Activated naive CD4-positive, alpha-beta T cell treated with anti-CD3 and anti-CD28 coated beads for 36 hours (primary cell): ENCODE measurements at regions of chr6 and their contacts with region 1.

Region 1: DNA sequence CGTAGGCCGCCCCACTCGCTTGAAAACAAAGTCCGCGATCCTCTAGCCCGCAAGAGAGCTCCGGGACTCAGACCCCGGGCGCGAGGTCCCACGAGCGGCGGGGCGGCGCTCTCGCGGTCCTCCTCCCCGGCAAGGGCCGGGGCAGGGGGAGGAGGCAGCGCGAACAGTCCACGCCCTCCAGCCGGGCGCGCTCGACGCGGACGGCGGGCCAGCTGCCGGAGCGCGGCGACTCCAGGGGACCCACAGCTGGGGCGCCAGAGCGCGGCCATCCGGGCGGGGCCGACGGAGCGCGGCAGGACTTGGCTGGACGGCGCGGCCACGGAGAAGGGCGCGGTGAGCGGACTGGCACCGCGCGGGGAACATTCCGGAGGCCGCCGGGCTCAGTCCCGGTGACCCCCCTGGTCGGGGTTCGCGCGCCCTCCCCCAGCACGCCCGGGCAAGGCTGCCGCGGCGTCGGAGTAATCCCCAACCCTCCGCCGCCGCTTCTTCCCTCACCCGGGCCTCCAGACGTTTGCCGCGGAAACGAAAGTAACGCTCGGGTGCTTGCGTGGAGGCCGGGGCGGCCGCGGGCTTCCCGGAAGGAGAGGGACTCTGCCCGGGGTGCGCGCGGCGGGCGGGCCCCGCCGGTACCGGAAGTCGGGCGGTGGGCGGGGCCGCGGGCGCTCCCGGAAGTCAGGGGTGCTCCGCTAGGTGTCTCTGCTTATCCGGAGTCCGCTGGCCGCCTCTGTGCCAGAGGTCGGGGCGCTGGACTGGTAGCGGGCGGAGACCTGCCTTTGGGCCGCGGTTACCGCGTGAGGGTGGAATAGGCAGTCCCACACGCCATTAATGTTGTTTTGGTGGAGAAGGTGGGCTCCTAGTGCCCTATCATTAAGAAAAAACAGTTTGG is at the start of gene RIPK1:
- DNase-seq: peak; percentile 95
- H3K4me3 Mint-ChIP-seq: peak within 1 kb of the TSS; percentile 92
- H3K27ac Mint-ChIP-seq: peak within 1 kb of the TSS; percentile 97
- H3K4me1 Mint-ChIP-seq: peaks cover 49% of the 10 kb centered on the region
- H3K27me3 Mint-ChIP-seq: no peaks in the 10 kb centered on the region
- total RNA-seq, gene RIPK1: 8.8 to 10.1 TPM

Region 2: GRCh38 chr6:3157131-3157927 is 88.8 kb after region 1 on chr6 and contains the start of gene TUBB2A:
- CTCF ChIA-PET with region 1: no interaction called
- intact Hi-C with region 1: loop called (anchors 1 kb)
- DNase-seq: peak; percentile 78
- H3K4me3 Mint-ChIP-seq: peak within 1 kb of the TSS; percentile 74
- H3K27ac Mint-ChIP-seq: no peak within 1 kb of the TSS
- H3K4me1 Mint-ChIP-seq: peaks cover 18% of the 10 kb centered on the region
- H3K27me3 Mint-ChIP-seq: peaks cover 18% of the 10 kb centered on the region
- total RNA-seq, gene TUBB2A: 1.0 to 1.2 TPM

Region 3: DNA sequence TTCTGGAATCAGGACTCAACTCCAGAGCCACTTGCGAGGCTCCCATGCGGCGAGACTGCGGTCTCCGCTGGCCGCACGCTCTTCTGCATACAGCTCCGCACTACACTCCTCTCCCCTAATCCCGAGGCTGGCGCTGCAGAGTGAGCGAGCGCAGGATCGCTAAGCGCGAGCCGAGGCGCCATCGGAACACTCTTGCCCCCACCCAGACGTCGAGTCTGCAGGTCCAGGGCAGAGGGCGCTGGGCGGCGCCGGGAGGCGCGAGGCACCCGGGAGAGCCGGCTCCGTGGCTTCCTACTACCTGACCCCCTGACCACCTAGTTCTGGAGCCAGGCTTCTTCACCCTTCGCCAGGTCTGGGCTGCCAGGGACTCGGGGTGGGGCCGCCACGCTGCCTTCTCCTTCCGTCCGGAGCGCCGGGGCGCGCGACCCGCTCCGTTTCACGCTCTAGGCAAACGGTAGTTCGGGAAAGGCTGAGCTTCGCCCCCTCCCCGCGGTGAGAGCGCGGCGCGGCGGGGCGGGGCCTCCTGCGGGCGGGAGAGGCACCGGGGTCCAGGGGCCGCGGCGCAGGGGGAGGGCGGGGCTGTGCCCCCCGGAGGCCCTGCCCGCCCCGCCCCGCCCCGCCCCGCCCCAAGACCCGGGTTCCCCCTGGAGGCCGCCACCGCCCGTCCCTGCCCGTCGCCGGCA is 94.1 kb after region 1 on chr6:
- CTCF ChIA-PET with region 1: no interaction called
- intact Hi-C with region 1: loop called (anchors 1 kb)
- DNase-seq: peak; percentile 57
- H3K4me3 Mint-ChIP-seq: peak overlapping the region; percentile 80
- H3K27ac Mint-ChIP-seq: no peak overlapping the region
- H3K4me1 Mint-ChIP-seq: peaks cover 24% of the 10 kb centered on the region
- H3K27me3 Mint-ChIP-seq: peaks cover 23% of the 10 kb centered on the region

Region 4: DNA sequence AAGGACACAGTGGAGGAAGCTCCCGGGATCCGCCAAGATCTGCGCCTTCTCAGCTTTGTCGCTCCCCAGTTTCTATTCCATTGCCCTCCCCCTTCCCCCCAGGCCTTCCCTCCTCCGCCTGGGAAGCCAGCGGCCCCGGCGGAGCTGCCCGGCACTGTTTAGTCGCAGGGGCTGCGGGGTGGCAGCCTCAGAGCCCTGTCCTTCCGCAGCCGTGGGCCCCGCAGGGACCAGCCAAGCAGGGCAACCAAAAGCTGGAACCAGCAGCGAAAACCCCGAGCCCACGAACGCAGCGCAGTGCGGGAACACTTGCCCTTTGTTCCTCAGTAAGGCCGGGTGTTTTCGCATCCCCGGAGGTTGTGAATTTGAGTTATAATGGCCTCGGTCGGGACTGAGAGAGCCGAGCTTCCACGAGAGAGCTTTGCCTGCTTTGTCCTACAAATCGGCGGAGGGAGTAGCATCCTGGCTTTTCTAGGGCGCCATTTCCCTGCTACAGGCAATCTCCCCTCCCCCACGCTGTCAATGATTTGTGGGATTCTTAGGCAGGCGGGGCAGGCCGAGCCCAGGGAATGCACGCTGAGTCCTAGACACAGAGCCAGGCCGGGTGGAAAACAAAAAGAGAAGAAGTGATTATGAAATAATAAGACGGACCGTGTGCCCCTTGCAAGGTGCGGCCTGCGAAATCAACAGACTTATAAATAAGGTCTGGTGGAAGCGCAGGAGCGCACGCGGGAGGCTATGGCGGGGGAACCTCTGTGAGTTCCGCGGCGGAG is 162.9 kb after region 1 on chr6:
- CTCF ChIA-PET with region 1: no interaction called
- intact Hi-C with region 1: no loop called
- DNase-seq: no peak
- H3K4me3 Mint-ChIP-seq: peak overlapping the region; percentile 50
- H3K27ac Mint-ChIP-seq: no peak overlapping the region
- H3K4me1 Mint-ChIP-seq: peaks cover 43% of the 10 kb centered on the region
- H3K27me3 Mint-ChIP-seq: peaks cover 72% of the 10 kb centered on the region

Region 5: GRCh38 chr6:3258720-3259490 is 190.3 kb after region 1 on chr6 and contains the start of gene PSMG4:
- CTCF ChIA-PET with region 1: no interaction called
- intact Hi-C with region 1: loop called (anchors 2 kb)
- DNase-seq: peak; percentile 94
- H3K4me3 Mint-ChIP-seq: peak within 1 kb of the TSS; percentile 94
- H3K27ac Mint-ChIP-seq: peak within 1 kb of the TSS; percentile 87
- H3K4me1 Mint-ChIP-seq: peaks cover 35% of the 10 kb centered on the region
- H3K27me3 Mint-ChIP-seq: no peaks in the 10 kb centered on the region
- total RNA-seq, gene PSMG4: 23.9 to 26.2 TPM